AG04449 (cell line): ENCODE measurements at regions of chr9 and their contacts with region 1.

Region 1: GRCh38 chr9:22244141-22245011 is 202.2 kb upstream of the DMRTA1 start:
- DNase-seq: no peak
- H3K4me3 ChIP-seq: no peak overlapping the region
- CTCF ChIP-seq: peak; percentile 57

Region 2: DNA sequence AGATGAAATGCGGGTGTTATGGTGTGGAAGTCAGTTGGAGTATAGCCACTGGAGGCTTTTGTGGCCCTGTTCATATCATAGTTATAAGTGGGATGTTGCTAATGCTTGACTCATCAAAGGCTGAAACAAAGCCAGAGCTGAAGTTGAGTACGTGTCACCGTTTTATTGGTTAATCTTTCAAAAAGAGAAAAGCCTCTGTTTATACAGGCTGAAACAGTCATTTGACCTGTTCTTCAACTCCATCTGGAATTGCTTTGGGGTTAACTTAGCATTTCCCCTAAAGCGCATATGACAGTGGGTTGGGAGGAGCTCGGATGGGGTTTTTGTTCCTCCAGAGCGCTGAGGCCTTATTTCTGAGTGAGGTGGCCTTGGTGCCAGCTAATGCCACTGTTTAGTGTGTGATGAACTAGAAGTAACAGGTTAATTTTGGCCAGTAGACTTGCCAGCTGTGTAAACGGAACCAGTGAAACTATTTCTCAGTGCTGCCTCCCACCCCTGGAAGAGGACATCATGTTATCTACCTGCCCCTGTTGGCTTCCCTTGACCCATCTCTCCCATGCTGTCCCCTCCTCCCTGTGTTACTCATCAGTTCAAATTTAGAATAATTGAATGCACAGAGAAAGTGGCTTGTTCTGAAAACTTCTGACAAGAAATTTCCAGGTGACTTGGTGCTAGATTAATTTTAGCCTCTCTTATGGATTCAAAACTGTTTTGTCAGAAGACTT is 407.8 kb before region 1 on chr9:
- CTCF ChIA-PET with region 1: interaction called, 10 read pairs
- POLR2A ChIA-PET with region 1: no interaction called
- DNase-seq: peak; percentile 97
- H3K4me3 ChIP-seq: no peak overlapping the region
- CTCF ChIP-seq: no peak

Region 3: GRCh38 chr9:21968331-21969010 is 275.9 kb before region 1 on chr9:
- CTCF ChIA-PET with region 1: interaction called, 10 read pairs
- POLR2A ChIA-PET with region 1: no interaction called
- DNase-seq: no peak
- H3K4me3 ChIP-seq: peak overlapping the region; percentile 36
- CTCF ChIP-seq: no peak

Region 4: GRCh38 chr9:22425551-22425950 is 181.2 kb after region 1 on chr9:
- CTCF ChIA-PET with region 1: no interaction called
- POLR2A ChIA-PET with region 1: no interaction called
- DNase-seq: no peak
- H3K4me3 ChIP-seq: no peak overlapping the region
- CTCF ChIP-seq: no peak

Region 5: GRCh38 chr9:22483528-22484070 is 239.2 kb after region 1 on chr9:
- CTCF ChIA-PET with region 1: no interaction called
- POLR2A ChIA-PET with region 1: no interaction called
- DNase-seq: no peak
- H3K4me3 ChIP-seq: no peak overlapping the region
- CTCF ChIP-seq: no peak